ENCODE measurements at regions of chr9 and their contacts with region 1.

Region 1: GRCh38 chr9:113807173-113808061 is 68.7 kb upstream of the ZNF618 start:
- DNase-seq: no peak
- H3K4me3 Mint-ChIP-seq: no peak overlapping the region
- H3K27ac Mint-ChIP-seq: no peak overlapping the region
- H3K4me1 Mint-ChIP-seq: no peaks in the 10 kb centered on the region
- H3K27me3 Mint-ChIP-seq: no peaks in the 10 kb centered on the region

Region 2: DNA sequence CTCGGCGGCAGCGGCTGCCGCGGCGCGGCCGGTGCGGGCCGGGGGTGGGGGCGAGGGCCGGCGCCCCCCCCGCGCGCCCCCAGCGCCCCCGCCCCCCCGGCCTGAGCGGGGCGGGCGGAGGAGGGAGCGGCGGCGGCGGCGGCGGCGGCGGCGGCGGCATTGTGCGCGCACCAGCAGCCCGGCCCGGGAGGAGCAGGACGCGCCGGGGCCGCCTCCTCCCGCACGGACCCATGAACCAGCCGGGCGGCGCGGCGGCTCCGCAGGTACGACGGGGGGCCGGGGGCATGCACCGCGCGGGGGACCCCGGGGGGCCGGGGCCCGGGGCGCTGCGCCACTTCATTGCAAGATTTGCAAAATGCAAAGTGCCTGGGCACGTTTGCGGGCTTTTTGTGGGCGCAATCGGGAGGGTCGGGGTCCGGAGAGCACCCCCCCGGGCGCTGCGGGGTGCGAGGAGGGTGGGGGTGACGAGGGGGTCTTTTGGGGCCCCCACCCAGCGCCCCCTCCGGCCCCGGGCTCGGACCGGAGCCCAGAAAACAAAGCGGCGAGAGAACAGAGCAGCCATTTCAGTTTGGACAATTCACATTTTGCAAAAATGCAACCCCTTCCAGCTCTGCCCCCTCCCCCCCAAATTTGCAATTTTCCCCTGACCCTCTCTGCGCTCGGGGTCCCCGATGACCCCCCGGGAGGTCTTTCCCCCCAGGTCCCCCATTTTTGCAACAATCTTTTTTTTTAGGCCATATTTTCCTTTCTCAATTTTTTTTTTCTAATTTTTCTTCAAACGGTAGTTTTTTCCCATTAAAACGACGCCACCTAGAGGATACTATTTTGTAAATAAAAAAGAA is 69.0 kb after region 1 on chr9 and contains the start of gene ZNF618:
- intact Hi-C with region 1: loop called (anchors 2 kb)
- DNase-seq: no peak
- H3K4me3 Mint-ChIP-seq: peak within 1 kb of the TSS; percentile 90
- H3K27ac Mint-ChIP-seq: peak within 1 kb of the TSS; percentile 56
- H3K4me1 Mint-ChIP-seq: peaks cover 4% of the 10 kb centered on the region
- H3K27me3 Mint-ChIP-seq: peaks cover 31% of the 10 kb centered on the region
- total RNA-seq, gene ZNF618: 0.25 TPM in 2 replicates

Region 3: DNA sequence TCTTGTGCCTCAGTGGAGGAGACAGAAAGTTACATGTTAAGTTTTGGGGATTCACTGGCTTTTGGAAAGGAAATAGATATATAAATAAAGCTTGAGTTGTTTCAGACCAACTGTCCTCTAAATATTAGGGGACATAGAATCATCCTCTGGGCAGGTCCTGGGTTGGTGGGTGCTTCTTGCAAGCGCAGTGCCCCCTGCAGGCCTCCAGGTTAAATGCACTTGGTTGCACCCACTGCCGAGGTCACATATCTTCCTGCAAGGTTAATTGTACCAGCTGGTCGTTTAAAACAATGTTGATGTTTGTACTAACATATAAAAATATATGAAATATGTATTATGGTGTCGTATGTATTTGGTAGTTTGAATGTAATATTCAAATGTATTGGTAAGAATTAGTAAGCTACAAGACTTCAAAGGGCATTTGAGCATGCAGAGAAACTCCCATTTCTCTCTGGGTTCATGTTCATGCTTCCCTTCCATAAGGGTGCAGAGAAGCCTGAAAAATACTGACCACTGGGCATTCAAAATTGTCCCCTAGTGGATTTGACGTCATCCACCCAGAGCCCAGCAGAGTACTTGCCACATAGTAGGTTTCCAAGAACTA is 155.7 kb after region 1 on chr9:
- intact Hi-C with region 1: loop called (anchors 5 kb)
- DNase-seq: peak; percentile 10
- H3K4me3 Mint-ChIP-seq: no peak overlapping the region
- H3K27ac Mint-ChIP-seq: no peak overlapping the region
- H3K4me1 Mint-ChIP-seq: no peaks in the 10 kb centered on the region
- H3K27me3 Mint-ChIP-seq: no peaks in the 10 kb centered on the region

Region 4: GRCh38 chr9:114033397-114034103 is 226.1 kb after region 1 on chr9:
- intact Hi-C with region 1: loop called (anchors 10 kb)
- DNase-seq: no peak
- H3K4me3 Mint-ChIP-seq: no peak overlapping the region
- H3K27ac Mint-ChIP-seq: no peak overlapping the region
- H3K4me1 Mint-ChIP-seq: no peaks in the 10 kb centered on the region
- H3K27me3 Mint-ChIP-seq: no peaks in the 10 kb centered on the region